Activated CD4-positive, alpha-beta memory T cell treated with anti-CD3 and anti-CD28 coated beads, Interleukin-2, amount 10 ng/mL, durations not matched to agents 7 days and 5 days (primary cell): ENCODE measurements at regions of chrX and their contacts with region 1.

Region 1: GRCh38 chrX:9677098-9677739 is 88.4 kb downstream of the GPR143 start:
- DNase-seq: peak; percentile 48
- H3K4me3 Mint-ChIP-seq: peak overlapping the region; percentile 34
- H3K27ac Mint-ChIP-seq: peak overlapping the region; percentile 82
- H3K4me1 Mint-ChIP-seq: peaks cover 36% of the 10 kb centered on the region
- H3K27me3 Mint-ChIP-seq: no peaks in the 10 kb centered on the region

Region 2: GRCh38 chrX:9464435-9465371 is 212.5 kb before region 1 on chrX and contains the start of gene TBL1X:
- CTCF ChIA-PET with region 1: no interaction called
- POLR2A ChIA-PET with region 1: interaction called, 11 read pairs
- DNase-seq: peak; percentile 64
- H3K4me3 Mint-ChIP-seq: peak within 1 kb of the TSS; percentile 74
- H3K27ac Mint-ChIP-seq: peak within 1 kb of the TSS; percentile 81
- H3K4me1 Mint-ChIP-seq: peaks cover 45% of the 10 kb centered on the region
- H3K27me3 Mint-ChIP-seq: no peaks in the 10 kb centered on the region
- total RNA-seq, gene TBL1X: 39.5 to 44.0 TPM

Region 3: DNA sequence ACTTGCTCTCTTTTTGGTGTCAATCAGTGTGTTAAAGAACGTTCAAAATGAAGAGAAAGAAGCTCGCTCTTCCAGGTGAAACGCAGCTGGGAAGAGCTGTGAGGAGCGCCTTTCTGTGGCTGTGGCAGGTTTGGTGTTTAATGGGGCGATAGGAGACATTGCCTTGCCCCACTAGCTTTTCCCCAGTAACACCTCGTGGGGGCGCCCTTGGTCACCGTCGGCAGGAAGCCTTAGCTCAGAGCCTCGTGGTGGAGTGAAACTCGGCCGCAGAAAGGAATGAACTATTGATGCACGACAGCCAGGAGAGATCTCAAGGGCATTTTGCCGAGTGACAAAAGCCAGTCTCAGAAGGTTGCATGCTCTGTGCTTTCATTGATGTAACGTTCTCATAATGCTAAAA is 23.3 kb after region 1 on chrX:
- CTCF ChIA-PET with region 1: no interaction called
- POLR2A ChIA-PET with region 1: no interaction called
- DNase-seq: no peak
- H3K4me3 Mint-ChIP-seq: no peak overlapping the region
- H3K27ac Mint-ChIP-seq: no peak overlapping the region
- H3K4me1 Mint-ChIP-seq: no peaks in the 10 kb centered on the region
- H3K27me3 Mint-ChIP-seq: no peaks in the 10 kb centered on the region